ENCODE measurements at regions of chr18 and their contacts with region 1.

Region 1: GRCh38 chr18:65938592-65939372 is 188.0 kb downstream of the CDH7 start:
- DNase-seq: peak in 1 of 2 donors; percentile 9
- ATAC-seq: peak; percentile 59

Region 2: DNA sequence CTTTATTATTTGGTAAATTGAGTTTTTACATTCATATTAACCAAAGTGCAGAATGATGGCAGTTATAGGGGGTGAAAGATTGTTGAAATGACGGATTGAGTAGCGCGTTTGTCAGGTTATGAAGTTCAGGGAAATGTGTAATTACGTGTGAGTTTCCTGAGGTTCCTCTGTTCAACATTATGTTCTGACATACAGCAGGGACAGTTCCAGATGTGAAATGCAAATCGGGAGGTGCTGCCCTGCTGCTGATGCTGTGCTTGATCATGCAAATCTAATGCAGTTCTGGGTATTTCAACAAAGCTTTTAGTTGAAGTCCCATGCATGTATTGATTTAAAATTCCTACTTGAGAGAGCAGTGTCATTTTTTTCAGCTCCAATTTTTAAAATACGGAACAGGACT is 130.0 kb before region 1 on chr18:
- intact Hi-C with region 1: no loop called
- DNase-seq: no peak
- ATAC-seq: no peak

Region 3: GRCh38 chr18:65990944-65991708 is 52.3 kb after region 1 on chr18:
- intact Hi-C with region 1: loop called in 1 of 2 experiments (anchors 10 kb)
- DNase-seq: no peak
- ATAC-seq: no peak